ENCODE measurements at regions of chr11 and their contacts with region 1.

Region 1: GRCh38 chr11:47971501-47971900 is 8.9 kb upstream of the PTPRJ start:
- H3K4me3 Mint-ChIP-seq: no peak overlapping the region
- H3K27ac Mint-ChIP-seq: no peak overlapping the region
- H3K4me1 Mint-ChIP-seq: peaks cover 23% of the 10 kb centered on the region
- H3K27me3 Mint-ChIP-seq: no peaks in the 10 kb centered on the region

Region 2: GRCh38 chr11:47938791-47939560 is 32.5 kb before region 1 on chr11:
- intact Hi-C with region 1: loop called (anchors 5 kb)
- H3K4me3 Mint-ChIP-seq: no peak overlapping the region
- H3K27ac Mint-ChIP-seq: peak overlapping the region; percentile 80
- H3K4me1 Mint-ChIP-seq: peaks cover 61% of the 10 kb centered on the region
- H3K27me3 Mint-ChIP-seq: no peaks in the 10 kb centered on the region

Measured in dendritic cell treated with granulocyte-macrophage colony-stimulating factor and Interleukin-4, amounts not matched to agents 40 ng/mL and 50 ng/mL, for 4 days (primary cell).